PC-3 (cell line): ENCODE measurements at regions of chr20 and their contacts with region 1.

Region 1: GRCh38 chr20:45833030-45833882 is at the start of gene SNX21:
- DNase-seq: peak; percentile 82
- ATAC-seq: peak; percentile 77
- H3K4me3 ChIP-seq: peak within 1 kb of the TSS; percentile 78
- H3K27ac ChIP-seq: peak within 1 kb of the TSS; percentile 66
- H3K4me1 ChIP-seq: peaks cover 35% of the 10 kb centered on the region
- H3K27me3 ChIP-seq: no peaks in the 10 kb centered on the region
- CTCF ChIP-seq: no peak
- total RNA-seq, gene SNX21: 90.1 and 108 TPM in 2 replicates

Region 2: DNA sequence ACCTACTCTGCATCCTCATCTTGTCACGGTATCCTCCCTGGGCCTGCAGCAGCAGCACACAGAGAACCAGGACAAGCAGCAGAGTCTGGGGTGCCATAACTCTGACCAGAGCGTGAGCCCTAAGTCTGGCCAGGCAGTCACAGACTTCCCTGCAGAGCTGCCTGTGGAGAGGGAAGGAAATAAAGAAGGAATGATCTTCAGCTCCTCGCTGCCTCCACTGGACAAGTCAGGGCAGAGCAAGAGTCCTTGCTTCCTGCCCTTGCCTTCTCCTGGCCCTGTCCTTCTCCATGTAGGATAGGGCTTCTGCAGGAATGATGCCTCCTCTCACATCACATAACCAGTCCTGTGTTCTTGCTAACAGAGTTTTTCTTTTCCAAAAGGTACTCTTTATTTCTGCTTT is 147.4 kb before region 1 on chr20:
- CTCF ChIA-PET with region 1: no interaction called
- POLR2A ChIA-PET with region 1: no interaction called
- intact Hi-C with region 1: no loop called
- DNase-seq: peak; percentile 28
- ATAC-seq: peak; percentile 65
- H3K4me3 ChIP-seq: no peak overlapping the region
- H3K27ac ChIP-seq: no peak overlapping the region
- H3K4me1 ChIP-seq: no peaks in the 10 kb centered on the region
- H3K27me3 ChIP-seq: 0 out of 2 replicates have a peak, but pooled peaks cover 4% of the 10 kb centered on the region
- CTCF ChIP-seq: peak; percentile 35

Region 3: DNA sequence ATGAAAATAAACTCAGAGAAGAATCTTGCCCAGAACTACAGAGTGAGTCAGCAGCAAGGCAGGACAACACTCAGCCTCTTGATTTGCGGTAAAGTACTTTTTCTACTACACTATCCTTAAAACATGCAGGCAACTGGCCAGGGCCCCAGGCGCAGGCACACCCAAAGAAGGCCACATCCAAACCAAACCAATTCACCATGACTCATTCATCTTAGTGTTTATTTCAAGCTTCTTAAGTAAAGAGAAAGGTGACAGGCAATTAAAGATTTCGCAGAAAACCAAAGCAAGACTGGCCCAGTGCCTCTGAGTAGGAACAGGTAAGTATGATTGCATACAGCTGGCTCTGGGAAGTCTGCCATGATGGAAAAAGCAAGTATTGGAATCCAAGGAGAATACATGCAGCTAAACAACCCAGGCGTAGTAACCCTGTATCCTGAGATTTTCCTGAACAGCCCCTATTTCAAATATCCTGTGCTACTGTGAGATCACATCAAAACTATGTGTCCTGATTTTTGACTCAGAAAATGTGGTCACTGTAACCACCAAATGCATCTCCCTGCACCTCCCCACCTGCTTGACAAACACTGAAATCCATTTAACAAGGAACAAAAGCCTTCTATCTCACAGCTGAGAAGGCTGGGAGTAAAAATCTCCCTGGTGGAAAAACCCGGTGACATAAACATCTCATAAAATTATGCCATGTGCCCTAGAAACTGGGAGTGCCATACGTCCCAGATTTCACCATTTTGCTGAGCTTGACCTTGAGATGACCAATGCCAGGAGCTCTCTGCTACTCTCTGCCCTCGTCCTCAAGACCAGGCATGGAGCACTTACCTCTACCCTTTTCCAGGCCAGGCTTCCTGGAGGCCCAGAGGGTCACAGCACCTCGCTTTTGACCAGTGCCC is 54.0 kb before region 1 on chr20:
- CTCF ChIA-PET with region 1: no interaction called
- POLR2A ChIA-PET with region 1: no interaction called
- intact Hi-C with region 1: loop called (anchors 2 kb)
- DNase-seq: peak; percentile 99
- ATAC-seq: peak; percentile 63
- H3K4me3 ChIP-seq: peak overlapping the region; percentile 11; the same call in 1 of the 2 replicates
- H3K27ac ChIP-seq: peak overlapping the region; percentile 99
- H3K4me1 ChIP-seq: peaks cover 62% of the 10 kb centered on the region
- H3K27me3 ChIP-seq: no peaks in the 10 kb centered on the region
- CTCF ChIP-seq: no peak

Region 4: GRCh38 chr20:45867819-45868176 is 34.5 kb after region 1 on chr20:
- CTCF ChIA-PET with region 1: no interaction called
- POLR2A ChIA-PET with region 1: interaction called, 5 read pairs
- intact Hi-C with region 1: loop called (anchors 1 kb)
- DNase-seq: peak; percentile 91
- ATAC-seq: peak; percentile 94
- H3K4me3 ChIP-seq: peak overlapping the region; percentile 8; the same call in 1 of the 2 replicates
- H3K27ac ChIP-seq: peak overlapping the region; percentile 85
- H3K4me1 ChIP-seq: peaks cover 28% of the 10 kb centered on the region
- H3K27me3 ChIP-seq: no peaks in the 10 kb centered on the region
- CTCF ChIP-seq: no peak

Region 5: DNA sequence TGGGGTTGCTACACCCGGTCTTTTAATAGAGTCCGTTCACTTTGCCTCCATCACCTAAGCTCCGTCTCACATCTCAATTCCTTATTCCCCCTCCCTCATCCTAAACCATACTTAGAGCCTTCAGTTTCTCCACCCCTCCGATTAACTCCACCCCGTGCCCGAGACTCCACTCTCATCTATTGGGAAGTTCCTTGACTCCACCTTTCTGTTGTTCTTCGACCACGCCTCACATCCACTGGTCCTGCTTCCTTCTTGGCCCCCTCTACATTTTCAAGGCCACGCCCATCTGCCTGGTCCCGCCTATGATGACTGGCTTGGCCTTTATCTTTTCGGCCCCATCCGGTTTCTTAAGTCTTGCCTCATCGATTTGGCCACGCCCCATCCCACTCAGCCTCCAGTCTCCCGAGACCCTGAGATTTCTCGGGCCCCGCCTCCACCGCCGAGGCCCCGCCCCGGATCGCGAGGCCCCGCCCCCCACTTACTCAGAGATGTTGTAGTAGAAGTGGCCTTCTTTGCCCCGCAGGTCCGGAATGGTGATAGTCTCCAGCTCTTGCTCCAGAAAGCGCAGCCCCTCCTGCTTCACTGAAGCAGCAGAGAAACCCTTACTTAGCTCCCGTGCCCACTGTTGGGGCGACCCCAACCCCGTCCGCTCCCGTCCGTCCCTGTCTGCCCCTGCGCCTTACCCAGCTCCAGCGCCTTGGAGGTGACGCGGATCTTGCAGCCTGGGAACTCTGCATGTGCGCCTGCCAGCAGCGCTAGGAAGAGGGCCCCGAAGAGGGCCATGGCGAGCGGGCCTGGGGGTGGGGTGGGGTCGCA is 77.6 kb after region 1 on chr20:
- CTCF ChIA-PET with region 1: no interaction called
- POLR2A ChIA-PET with region 1: interaction called, 29 read pairs
- intact Hi-C with region 1: no loop called
- DNase-seq: peak; percentile 99
- ATAC-seq: peak; percentile 76
- H3K4me3 ChIP-seq: peak overlapping the region; percentile 65
- H3K27ac ChIP-seq: peak overlapping the region; percentile 35
- H3K4me1 ChIP-seq: peaks cover 15% of the 10 kb centered on the region
- H3K27me3 ChIP-seq: no peaks in the 10 kb centered on the region
- CTCF ChIP-seq: no peak

Region 6: DNA sequence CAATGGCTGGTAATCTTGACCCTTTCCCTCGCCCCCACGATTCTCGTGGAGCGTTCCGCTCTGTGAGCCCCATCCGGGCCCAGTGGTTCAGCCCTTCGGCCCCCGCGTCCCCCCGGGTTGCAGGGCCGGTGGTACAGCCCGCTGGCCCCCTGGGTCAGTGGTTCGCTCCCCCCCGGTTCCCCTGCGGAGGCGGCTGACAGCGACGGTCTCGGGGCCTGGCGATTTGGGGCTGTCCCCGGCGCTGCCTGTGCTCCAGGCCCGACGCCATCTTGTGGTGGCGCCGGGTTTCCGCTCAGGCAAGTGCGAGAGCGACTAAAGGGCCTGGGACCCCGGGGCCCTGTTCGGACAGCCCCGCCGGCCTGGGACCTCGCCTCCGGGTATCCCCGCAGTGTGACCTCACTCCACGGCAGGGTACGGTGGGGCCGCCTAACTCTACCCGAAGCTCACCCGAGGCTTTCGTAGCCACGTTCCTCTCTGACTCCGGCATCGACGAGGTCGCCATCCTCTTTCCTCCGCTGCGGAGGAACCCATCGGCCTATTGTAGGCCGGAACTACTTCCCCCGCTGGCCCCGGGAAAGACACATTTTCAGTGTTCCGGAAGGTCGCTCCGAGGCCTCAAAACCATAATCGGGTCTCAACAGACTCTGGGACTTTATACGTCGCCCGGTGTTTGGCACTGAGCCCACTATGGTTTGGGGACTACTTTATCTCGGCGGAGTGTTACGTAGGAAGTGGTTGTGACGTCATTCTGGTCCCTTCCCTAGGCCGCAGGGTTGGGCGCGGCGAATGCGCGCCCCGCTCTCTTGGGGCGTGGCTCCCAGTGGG is 138.6 kb after region 1 on chr20 and contains the start of gene ZNF335:
- CTCF ChIA-PET with region 1: interaction called, 3 read pairs
- POLR2A ChIA-PET with region 1: no interaction called
- intact Hi-C with region 1: loop called (anchors 10 kb)
- DNase-seq: peak; percentile 95
- ATAC-seq: peak; percentile 65
- H3K4me3 ChIP-seq: peak within 1 kb of the TSS; percentile 76
- H3K27ac ChIP-seq: peak within 1 kb of the TSS; percentile 98
- H3K4me1 ChIP-seq: peaks cover 34% of the 10 kb centered on the region
- H3K27me3 ChIP-seq: no peaks in the 10 kb centered on the region
- CTCF ChIP-seq: no peak
- total RNA-seq, gene ZNF335: 32.2 and 36.9 TPM in 2 replicates